Psoas muscle (tissue), 8 donors: ENCODE measurements at regions of chr3 and their contacts with region 1.

Region 1: DNA sequence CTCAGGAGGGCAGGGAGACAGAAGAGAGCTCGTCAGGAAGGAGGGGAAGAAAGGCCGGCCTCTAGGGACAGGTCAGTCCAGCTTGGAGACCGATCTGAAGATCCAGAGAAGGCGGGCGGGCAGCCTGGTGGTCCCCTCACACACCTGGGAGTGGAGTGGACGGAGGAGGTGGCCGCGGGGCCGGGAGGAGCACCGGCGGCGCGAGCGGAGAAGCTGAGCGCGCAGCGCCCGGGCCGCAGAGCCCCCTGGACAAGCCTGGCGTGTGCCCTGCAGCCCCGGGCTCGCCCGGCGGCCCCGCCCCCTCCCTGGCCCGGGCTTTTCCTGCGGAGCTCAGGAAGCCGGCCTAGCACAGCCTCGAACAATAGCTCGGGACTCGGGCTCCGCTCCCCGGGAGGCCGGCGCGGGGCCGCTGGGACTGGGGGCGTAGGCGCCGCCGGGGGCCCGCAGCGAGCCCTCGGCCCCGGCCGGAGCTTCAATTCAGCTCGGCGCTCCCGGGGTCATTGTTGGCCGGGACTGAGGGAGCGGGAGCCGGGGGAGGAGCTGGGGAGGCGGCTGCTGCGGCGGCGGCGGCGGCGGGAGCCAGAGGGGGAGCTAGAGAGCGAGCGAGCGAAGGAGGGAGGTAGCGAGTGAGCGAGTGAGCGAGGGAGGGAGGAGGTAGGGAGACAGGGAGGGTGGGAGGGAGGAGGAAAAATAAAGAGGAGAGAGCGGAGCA is 40.9 kb upstream of the ROPN1 start:
- DNase-seq: peak; percentile 86 to 92
- ATAC-seq: peak; percentile 95 to 97 (median 96)
- H3K4me3 ChIP-seq: peak overlapping the region; percentile 87
- H3K27ac ChIP-seq: peak overlapping the region; percentile 88
- H3K4me1 ChIP-seq: peaks cover 4% of the 10 kb centered on the region
- H3K27me3 ChIP-seq: peaks cover 0 to 23% (median 0%) of the 10 kb centered on the region in 3 donors
- CTCF ChIP-seq: peak; percentile 64

Region 2: GRCh38 chr3:123344175-123344906 is 688.5 kb before region 1 on chr3:
- intact Hi-C with region 1: no loop called
- DNase-seq: no peak
- ATAC-seq: no peak
- H3K4me3 ChIP-seq: no peak overlapping the region
- H3K27ac ChIP-seq: no peak overlapping the region
- H3K4me1 ChIP-seq: no peaks in the 10 kb centered on the region
- H3K27me3 ChIP-seq: peaks cover 0 to 13% (median 0%) of the 10 kb centered on the region in 3 donors
- CTCF ChIP-seq: no peak

Region 3: DNA sequence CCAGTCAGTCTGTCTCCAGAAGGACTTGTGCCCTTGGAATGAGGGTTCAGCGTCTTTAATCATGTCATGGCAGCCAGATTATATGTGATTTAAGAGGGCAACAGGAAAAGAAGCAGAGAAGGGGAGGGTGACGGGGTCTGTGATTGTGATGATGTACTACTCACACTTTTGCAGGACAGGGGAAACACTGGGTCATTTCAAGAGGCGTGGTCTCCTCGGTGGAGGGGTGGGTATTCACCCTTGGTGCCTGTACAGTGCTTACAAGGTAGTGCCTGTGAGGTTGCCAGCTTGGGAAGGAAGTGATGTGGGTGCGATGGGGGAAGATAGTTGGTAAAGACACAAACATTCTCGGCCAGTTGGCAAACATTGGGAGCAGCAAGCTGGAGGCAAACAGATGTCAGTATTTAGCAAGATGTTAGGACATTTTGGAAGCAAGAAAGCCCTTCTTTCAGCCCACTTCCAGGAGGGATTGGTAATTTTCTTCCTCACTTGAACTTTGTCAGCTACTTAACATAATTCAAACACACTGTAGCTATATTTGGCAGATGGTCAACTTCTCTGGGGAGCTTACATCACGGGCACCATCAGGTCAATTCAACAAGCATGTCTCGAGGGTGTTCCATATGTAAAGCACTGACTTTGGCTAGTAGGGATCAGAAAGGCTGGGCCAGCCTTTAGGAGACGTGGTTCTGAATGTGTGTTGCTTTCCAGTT is 30.5 kb after region 1 on chr3:
- intact Hi-C with region 1: loop called in 1 of 2 experiments (anchors 5 kb)
- DNase-seq: no peak
- ATAC-seq: peak in 2 of 4 donors; percentile 27 to 44
- H3K4me3 ChIP-seq: no peak overlapping the region
- H3K27ac ChIP-seq: no peak overlapping the region
- H3K4me1 ChIP-seq: peaks cover 11% of the 10 kb centered on the region
- H3K27me3 ChIP-seq: no peaks in the 10 kb centered on the region
- CTCF ChIP-seq: no peak

Region 4: GRCh38 chr3:124078953-124079911 is 46.4 kb after region 1 on chr3:
- intact Hi-C with region 1: loop called in 1 of 2 experiments (anchors 5 kb)
- DNase-seq: no peak
- ATAC-seq: peak; percentile 50 to 75 (median 62)
- H3K4me3 ChIP-seq: no peak overlapping the region
- H3K27ac ChIP-seq: peak overlapping the region; percentile 26
- H3K4me1 ChIP-seq: peaks cover 10% of the 10 kb centered on the region
- H3K27me3 ChIP-seq: no peaks in the 10 kb centered on the region
- CTCF ChIP-seq: peak; percentile 73

Region 5: DNA sequence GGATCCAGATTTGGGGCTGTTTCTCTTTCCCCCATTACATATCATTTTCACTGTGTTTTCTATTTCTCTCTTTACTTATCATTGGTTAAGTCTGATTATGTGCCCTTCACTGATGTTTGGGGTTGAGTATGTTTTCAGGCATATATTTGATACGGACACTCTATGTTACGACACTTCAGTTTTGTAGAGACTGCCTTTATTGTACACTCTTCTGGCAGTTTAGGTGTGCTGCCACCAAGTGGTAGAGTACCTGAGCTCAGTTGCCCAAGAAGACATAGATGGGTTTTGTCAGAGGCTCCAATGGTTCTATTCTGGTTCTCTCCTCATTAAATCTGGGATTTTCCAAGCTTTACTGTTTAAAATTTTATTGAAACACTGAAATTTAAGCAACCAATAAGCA is 214.1 kb after region 1 on chr3:
- intact Hi-C with region 1: loop called in 1 of 2 experiments (anchors 10 kb)
- DNase-seq: no peak
- ATAC-seq: peak in 3 of 4 donors; percentile 61 to 75 (median 63)
- H3K4me3 ChIP-seq: no peak overlapping the region
- H3K27ac ChIP-seq: no peak overlapping the region
- H3K4me1 ChIP-seq: peaks cover 25% of the 10 kb centered on the region
- H3K27me3 ChIP-seq: no peaks in the 10 kb centered on the region
- CTCF ChIP-seq: peak; percentile 53

Region 6: DNA sequence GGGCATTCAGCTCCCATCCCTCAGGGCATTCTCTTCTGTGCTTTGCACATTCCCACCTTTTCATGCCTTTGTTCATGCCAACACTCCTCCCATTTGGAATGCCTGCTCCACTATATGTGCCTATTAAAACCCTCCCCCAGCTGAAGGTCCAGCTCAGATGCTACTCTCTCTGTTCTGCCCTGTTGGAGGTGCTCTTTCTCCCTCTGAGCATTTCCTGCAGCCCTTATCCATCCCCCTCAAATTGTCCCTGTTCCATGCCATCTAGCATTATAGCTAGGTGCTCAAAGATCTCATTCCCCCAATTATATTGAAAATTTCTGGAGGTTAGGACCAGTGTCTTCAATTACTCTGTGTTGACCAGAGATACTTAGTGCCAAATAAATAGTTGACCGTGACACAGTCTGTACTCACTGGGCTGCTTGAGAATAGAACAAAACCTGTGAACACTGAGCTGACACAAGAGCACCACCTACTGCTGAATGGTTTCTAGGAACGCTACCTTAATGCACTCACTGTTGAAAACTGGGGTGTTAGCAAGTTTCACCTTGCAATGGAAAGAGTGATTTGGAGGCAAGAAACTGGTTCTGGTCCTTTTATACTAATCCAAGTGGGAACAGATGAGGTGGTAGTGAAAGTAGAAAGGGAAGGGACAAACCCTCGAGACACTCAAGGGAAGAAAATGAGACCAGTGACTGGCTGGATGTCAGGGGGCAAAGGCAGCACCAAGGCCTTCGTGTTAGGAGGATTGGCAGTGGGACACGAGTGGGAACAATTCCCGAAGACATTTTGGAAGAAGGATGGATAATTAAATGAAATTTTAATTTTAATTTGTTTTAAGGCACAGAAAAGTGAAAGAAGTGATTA is 248.9 kb after region 1 on chr3:
- intact Hi-C with region 1: loop called in 1 of 2 experiments (anchors 5 kb)
- DNase-seq: no peak
- ATAC-seq: peak; percentile 63 to 84 (median 75)
- H3K4me3 ChIP-seq: no peak overlapping the region
- H3K27ac ChIP-seq: no peak overlapping the region
- H3K4me1 ChIP-seq: peaks cover 7% of the 10 kb centered on the region
- H3K27me3 ChIP-seq: no peaks in the 10 kb centered on the region
- CTCF ChIP-seq: peak; percentile 54